Keratinocyte (primary cell): ENCODE measurements at regions of chr7 and their contacts with region 1.

Region 1: GRCh38 chr7:94436018-94436604 is 41.4 kb downstream of the COL1A2 start:
- DNase-seq: no peak
- H3K4me3 ChIP-seq: no peak overlapping the region
- H3K27ac ChIP-seq: no peak overlapping the region
- H3K4me1 ChIP-seq: no peaks in the 10 kb centered on the region
- H3K27me3 ChIP-seq: no peaks in the 10 kb centered on the region
- CTCF ChIP-seq: peak; percentile 71 to 83 (median 81)

Region 2: DNA sequence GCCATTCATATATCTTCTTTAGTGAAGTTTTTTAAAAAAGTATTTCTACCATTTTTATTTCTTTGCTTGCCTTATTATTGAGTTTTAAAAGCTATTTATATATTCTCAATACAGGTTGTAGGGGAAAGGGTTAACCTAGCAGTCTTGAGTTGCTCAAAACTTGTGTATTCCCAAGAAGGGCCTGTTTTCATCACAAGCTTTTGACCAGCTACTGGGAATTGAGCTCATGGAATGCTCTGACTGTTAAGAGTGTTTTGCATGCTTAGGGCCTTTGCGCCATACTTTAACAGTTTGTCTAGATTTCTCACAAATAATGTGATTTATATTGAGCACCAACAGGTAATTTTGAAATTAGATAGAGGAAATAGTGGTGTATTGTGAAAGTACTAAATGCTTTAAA is 789.6 kb before region 1 on chr7:
- dilution Hi-C with region 1: no loop called
- DNase-seq: no peak
- H3K4me3 ChIP-seq: no peak overlapping the region
- H3K27ac ChIP-seq: no peak overlapping the region
- H3K4me1 ChIP-seq: no peaks in the 10 kb centered on the region
- H3K27me3 ChIP-seq: no peaks in the 10 kb centered on the region
- CTCF ChIP-seq: no peak

Region 3: GRCh38 chr7:94289071-94289470 is 147.0 kb before region 1 on chr7:
- dilution Hi-C with region 1: loop called (anchors 25 kb)
- DNase-seq: no peak
- H3K4me3 ChIP-seq: no peak overlapping the region
- H3K27ac ChIP-seq: no peak overlapping the region
- H3K4me1 ChIP-seq: no peaks in the 10 kb centered on the region
- H3K27me3 ChIP-seq: peaks cover 7% of the 10 kb centered on the region
- CTCF ChIP-seq: peak; percentile 94 to 98 (median 96)